ENCODE measurements at regions of chr9 and their contacts with region 1.

Region 1: GRCh38 chr9:110058304-110058953 is 149.5 kb downstream of the C9orf152 start:
- DNase-seq: peak in 4 of 5 donors; percentile 40 to 48 (median 47)
- H3K4me3 ChIP-seq: no peak overlapping the region
- H3K4me3 Mint-ChIP-seq: no peak overlapping the region
- H3K27ac ChIP-seq: no peak overlapping the region
- H3K27ac Mint-ChIP-seq: no peak overlapping the region
- H3K4me1 ChIP-seq: no peaks in the 10 kb centered on the region
- H3K4me1 Mint-ChIP-seq: peaks cover 4 to 15% (median 7%) of the 10 kb centered on the region in 4 donors
- H3K27me3 ChIP-seq: no peaks in the 10 kb centered on the region
- H3K27me3 Mint-ChIP-seq: no peaks in the 10 kb centered on the region

Region 2: GRCh38 chr9:109880277-109881169 is 177.9 kb before region 1 on chr9:
- CTCF ChIA-PET with region 1: interaction called, 11 read pairs
- POLR2A ChIA-PET with region 1: no interaction called
- intact Hi-C with region 1: no loop called
- DNase-seq: peak; percentile 14 to 41 (median 23)
- H3K4me3 ChIP-seq: no peak overlapping the region
- H3K4me3 Mint-ChIP-seq: peak overlapping the region in 4 of 8 donors; percentile 21 to 59 (median 43)
- H3K27ac ChIP-seq: no peak overlapping the region
- H3K27ac Mint-ChIP-seq: no peak overlapping the region
- H3K4me1 ChIP-seq: no peaks in the 10 kb centered on the region
- H3K4me1 Mint-ChIP-seq: peaks cover 0 to 5% (median 2%) of the 10 kb centered on the region in 4 donors
- H3K27me3 ChIP-seq: no peaks in the 10 kb centered on the region
- H3K27me3 Mint-ChIP-seq: peaks cover 1 to 4% of the 10 kb centered on the region in 2 donors

Region 3: DNA sequence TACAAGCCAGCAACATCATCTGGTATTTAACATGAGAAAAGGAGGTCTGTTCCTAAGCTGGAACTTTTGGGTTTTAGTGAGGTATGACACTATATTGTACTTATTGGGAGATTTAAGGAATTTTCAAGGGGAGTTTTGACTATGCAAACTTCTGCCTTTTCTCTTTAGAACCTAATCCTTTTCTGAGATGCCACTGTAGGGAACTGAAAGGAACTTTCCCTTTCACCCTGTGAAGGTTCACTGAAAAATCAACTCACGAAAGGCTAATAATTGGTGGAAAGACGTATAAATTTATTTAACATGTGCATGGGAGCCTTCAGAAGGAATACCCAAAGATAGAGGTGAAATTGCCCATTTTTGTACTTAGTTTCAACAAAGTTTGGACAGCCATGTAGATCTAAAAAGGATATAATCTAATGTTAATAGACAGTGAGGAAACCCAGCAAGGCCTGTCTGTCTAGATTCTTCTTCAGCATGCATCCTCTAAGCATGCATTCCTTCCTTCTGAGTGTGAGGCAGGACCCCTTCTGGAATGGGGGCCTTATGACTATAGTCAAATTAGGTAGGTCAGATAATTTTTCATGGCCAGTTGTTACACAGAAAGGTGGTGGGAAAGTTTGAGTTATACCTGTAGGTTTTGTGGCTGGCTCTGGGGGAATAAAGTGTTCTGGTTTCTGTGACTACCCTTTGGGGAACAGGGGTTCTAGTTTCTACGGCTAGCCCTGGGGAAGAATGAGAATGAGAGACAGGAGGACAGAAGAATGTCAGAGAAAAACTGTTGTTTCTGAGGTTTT is 50.8 kb before region 1 on chr9:
- CTCF ChIA-PET with region 1: interaction called, 3 read pairs
- POLR2A ChIA-PET with region 1: no interaction called
- intact Hi-C with region 1: loop called (anchors 2 kb)
- DNase-seq: no peak
- H3K4me3 ChIP-seq: no peak overlapping the region
- H3K4me3 Mint-ChIP-seq: no peak overlapping the region
- H3K27ac ChIP-seq: no peak overlapping the region
- H3K27ac Mint-ChIP-seq: peak overlapping the region in 1 of 7 donors; percentile 18
- H3K4me1 ChIP-seq: peaks cover 15% of the 10 kb centered on the region
- H3K4me1 Mint-ChIP-seq: peaks cover 11 to 34% (median 23%) of the 10 kb centered on the region in 4 donors
- H3K27me3 ChIP-seq: no peaks in the 10 kb centered on the region
- H3K27me3 Mint-ChIP-seq: peaks cover 0 to 2% of the 10 kb centered on the region in 2 donors